CD8-positive, alpha-beta T cell (primary cell): ENCODE measurements at regions of chr10 and their contacts with region 1.

Region 1: GRCh38 chr10:58963101-58963534 is 213.3 kb upstream of the PHYHIPL start:
- DNase-seq: no peak
- ATAC-seq: no peak
- H3K4me3 ChIP-seq: no peak overlapping the region
- H3K4me3 Mint-ChIP-seq: no peak overlapping the region
- H3K27ac ChIP-seq: no peak overlapping the region
- H3K27ac Mint-ChIP-seq: no peak overlapping the region
- H3K4me1 ChIP-seq: no peaks in the 10 kb centered on the region
- H3K4me1 Mint-ChIP-seq: no peaks in the 10 kb centered on the region
- H3K27me3 ChIP-seq: no peaks in the 10 kb centered on the region
- H3K27me3 Mint-ChIP-seq: peaks cover 10% of the 10 kb centered on the region
- CTCF ChIP-seq: no peak

Region 2: GRCh38 chr10:58930500-58930899 is 32.6 kb before region 1 on chr10:
- CTCF ChIA-PET with region 1: no interaction called
- POLR2A ChIA-PET with region 1: no interaction called
- intact Hi-C with region 1: loop called in 1 of 2 experiments (anchors 1 kb)
- DNase-seq: no peak
- ATAC-seq: no peak
- H3K4me3 ChIP-seq: no peak overlapping the region
- H3K4me3 Mint-ChIP-seq: no peak overlapping the region
- H3K27ac ChIP-seq: no peak overlapping the region
- H3K27ac Mint-ChIP-seq: no peak overlapping the region
- H3K4me1 ChIP-seq: no peaks in the 10 kb centered on the region
- H3K4me1 Mint-ChIP-seq: no peaks in the 10 kb centered on the region
- H3K27me3 ChIP-seq: no peaks in the 10 kb centered on the region
- H3K27me3 Mint-ChIP-seq: peaks cover 5% of the 10 kb centered on the region
- CTCF ChIP-seq: no peak